Gastrocnemius medialis (tissue), 4 donors: ENCODE measurements at regions of chrX and their contacts with region 1.

Region 1: GRCh38 chrX:103941201-103941975 is 21.0 kb upstream of the TMSB15B start:
- DNase-seq: no peak
- ATAC-seq: no peak
- H3K4me3 ChIP-seq: no peak overlapping the region
- H3K27ac ChIP-seq: no peak overlapping the region
- H3K4me1 ChIP-seq: no peaks in the 10 kb centered on the region
- H3K27me3 ChIP-seq: peaks cover 0 to 18% (median 0%) of the 10 kb centered on the region in 3 donors
- CTCF ChIP-seq: peak in 1 of 5 experiments; percentile 33
- POLR2A ChIP-seq: no peak

Region 2: DNA sequence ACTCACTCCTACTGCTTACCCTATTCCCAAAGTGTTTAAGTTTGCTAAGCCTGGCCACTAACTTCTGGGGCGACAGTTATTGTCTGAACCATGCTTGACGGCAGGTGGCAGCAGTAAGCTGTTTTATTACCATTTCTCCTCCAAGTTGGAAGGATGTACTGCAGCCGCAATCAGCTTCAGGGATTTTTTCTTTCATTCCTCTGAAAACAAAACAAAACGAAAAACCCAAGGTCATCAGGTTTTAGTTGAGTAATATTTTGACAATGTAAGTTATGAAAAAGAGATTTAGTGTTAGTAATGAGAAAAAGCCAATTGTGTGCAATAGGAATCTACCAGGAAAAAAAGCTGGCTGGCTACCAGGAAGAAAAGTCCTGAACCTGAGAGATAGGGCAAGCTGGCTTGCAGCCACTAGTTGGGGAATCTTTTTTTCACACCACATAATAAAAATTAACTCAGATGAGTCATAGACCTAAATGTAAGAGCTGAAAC is 96.2 kb before region 1 on chrX:
- in situ Hi-C with region 1: loop called in 1 of 4 experiments (anchors 25 kb)
- intact Hi-C with region 1: no loop called
- DNase-seq: peak in 1 of 2 donors; percentile 30
- ATAC-seq: peak; percentile 58 to 74
- H3K4me3 ChIP-seq: no peak overlapping the region
- H3K27ac ChIP-seq: no peak overlapping the region
- H3K4me1 ChIP-seq: no peaks in the 10 kb centered on the region
- H3K27me3 ChIP-seq: no peaks in the 10 kb centered on the region
- CTCF ChIP-seq: peak in 3 of 5 experiments; percentile 24 to 67 (median 43)
- POLR2A ChIP-seq: no peak